ENCODE measurements at regions of chrX and their contacts with region 1.

Region 1: DNA sequence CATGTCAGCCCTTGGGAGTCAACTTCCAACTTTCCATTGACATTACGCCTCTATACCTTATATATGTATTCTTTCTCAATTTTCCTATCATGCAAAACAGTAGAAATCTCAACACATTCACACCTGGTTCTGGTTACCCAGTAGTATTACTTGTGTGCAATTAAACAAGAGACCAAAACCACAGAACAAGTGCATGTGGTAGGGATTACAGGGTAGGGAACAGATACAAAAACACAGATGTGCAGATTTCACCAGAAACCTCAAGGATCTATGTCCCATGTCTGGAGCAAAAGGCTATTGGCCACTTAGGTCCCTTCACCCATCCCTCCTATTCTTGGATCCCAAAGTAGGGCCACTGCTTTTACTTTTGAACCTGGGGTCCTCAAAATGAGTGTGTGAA is 143.6 kb upstream of the ZCCHC13 start:
- DNase-seq: no peak
- ATAC-seq: no peak
- H3K4me3 ChIP-seq: no peak overlapping the region
- H3K4me3 Mint-ChIP-seq: no peak overlapping the region
- H3K27ac ChIP-seq: no peak overlapping the region
- H3K27ac Mint-ChIP-seq: no peak overlapping the region
- H3K4me1 ChIP-seq: no peaks in the 10 kb centered on the region
- H3K4me1 Mint-ChIP-seq: no peaks in the 10 kb centered on the region
- H3K27me3 ChIP-seq: no peaks in the 10 kb centered on the region
- H3K27me3 Mint-ChIP-seq: peaks cover 0 to 5% of the 10 kb centered on the region in 2 donors

Region 2: GRCh38 chrX:74049141-74049540 is 111.2 kb before region 1 on chrX:
- CTCF ChIA-PET with region 1: no interaction called
- POLR2A ChIA-PET with region 1: no interaction called
- DNase-seq: no peak
- ATAC-seq: no peak
- H3K4me3 ChIP-seq: no peak overlapping the region
- H3K4me3 Mint-ChIP-seq: no peak overlapping the region
- H3K27ac ChIP-seq: no peak overlapping the region
- H3K27ac Mint-ChIP-seq: no peak overlapping the region
- H3K4me1 ChIP-seq: no peaks in the 10 kb centered on the region
- H3K4me1 Mint-ChIP-seq: no peaks in the 10 kb centered on the region
- H3K27me3 ChIP-seq: peaks cover 0 to 7% of the 10 kb centered on the region in 2 experiments
- H3K27me3 Mint-ChIP-seq: no peaks in the 10 kb centered on the region

Region 3: GRCh38 chrX:74104356-74105015 is 55.9 kb before region 1 on chrX:
- CTCF ChIA-PET with region 1: no interaction called
- POLR2A ChIA-PET with region 1: interaction called in 1 of 2 experiments, 18 read pairs
- DNase-seq: no peak
- ATAC-seq: no peak
- H3K4me3 ChIP-seq: no peak overlapping the region
- H3K4me3 Mint-ChIP-seq: no peak overlapping the region
- H3K27ac ChIP-seq: no peak overlapping the region
- H3K27ac Mint-ChIP-seq: no peak overlapping the region
- H3K4me1 ChIP-seq: no peaks in the 10 kb centered on the region
- H3K4me1 Mint-ChIP-seq: no peaks in the 10 kb centered on the region
- H3K27me3 ChIP-seq: no peaks in the 10 kb centered on the region
- H3K27me3 Mint-ChIP-seq: peaks cover 0 to 18% of the 10 kb centered on the region in 2 donors

Region 4: DNA sequence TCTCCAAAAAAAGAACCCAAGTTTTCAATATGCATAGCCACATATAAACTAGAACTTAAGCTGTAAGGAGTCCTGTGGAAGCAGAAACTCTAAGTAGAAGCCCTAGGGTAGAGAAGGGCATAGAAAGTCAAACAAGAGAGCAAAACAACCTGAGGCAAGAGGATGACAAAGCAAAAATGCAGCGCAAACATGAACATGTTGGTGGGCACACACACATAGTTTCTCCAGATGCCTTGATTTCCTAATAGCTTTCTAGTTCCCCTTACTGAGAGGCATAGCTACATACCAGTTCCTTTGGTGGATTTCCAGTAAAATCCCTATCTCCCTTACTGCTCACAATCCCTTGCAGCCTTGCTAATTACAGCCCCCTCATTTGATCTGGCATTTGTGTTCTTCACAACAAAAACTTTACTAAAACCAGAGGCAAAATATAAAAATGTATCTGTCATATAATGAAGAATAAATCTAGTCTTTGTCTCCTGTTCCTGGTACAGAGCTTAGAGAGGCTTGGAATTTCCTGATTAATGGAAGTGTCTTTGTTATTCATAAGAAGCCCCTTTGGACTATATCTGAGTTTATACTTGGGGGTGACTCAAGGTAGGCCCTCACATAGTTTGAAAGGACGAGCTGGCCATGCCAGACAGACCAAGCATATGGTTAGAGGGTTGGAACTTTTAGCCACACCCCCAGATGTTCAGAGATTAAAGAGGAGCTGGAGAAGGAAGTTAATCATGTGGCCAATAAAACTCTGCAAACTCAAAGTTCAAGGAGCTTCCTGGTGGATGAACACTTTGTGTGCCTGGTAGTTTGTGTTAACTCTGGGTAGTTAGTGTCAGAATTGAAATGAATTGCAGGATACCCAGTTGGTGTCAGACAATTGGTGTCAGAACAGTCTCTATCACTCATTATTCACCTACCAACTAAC is 90.9 kb after region 1 on chrX:
- CTCF ChIA-PET with region 1: no interaction called
- POLR2A ChIA-PET with region 1: no interaction called
- DNase-seq: no peak
- ATAC-seq: no peak
- H3K4me3 ChIP-seq: no peak overlapping the region
- H3K4me3 Mint-ChIP-seq: no peak overlapping the region
- H3K27ac ChIP-seq: no peak overlapping the region
- H3K27ac Mint-ChIP-seq: peak overlapping the region; percentile 8 to 36
- H3K4me1 ChIP-seq: no peaks in the 10 kb centered on the region
- H3K4me1 Mint-ChIP-seq: peaks cover 9 to 22% (median 9%) of the 10 kb centered on the region in 3 donors
- H3K27me3 ChIP-seq: no peaks in the 10 kb centered on the region
- H3K27me3 Mint-ChIP-seq: peaks cover 0 to 16% of the 10 kb centered on the region in 2 donors